ENCODE measurements at regions of chr7 and their contacts with region 1.

Region 1: DNA sequence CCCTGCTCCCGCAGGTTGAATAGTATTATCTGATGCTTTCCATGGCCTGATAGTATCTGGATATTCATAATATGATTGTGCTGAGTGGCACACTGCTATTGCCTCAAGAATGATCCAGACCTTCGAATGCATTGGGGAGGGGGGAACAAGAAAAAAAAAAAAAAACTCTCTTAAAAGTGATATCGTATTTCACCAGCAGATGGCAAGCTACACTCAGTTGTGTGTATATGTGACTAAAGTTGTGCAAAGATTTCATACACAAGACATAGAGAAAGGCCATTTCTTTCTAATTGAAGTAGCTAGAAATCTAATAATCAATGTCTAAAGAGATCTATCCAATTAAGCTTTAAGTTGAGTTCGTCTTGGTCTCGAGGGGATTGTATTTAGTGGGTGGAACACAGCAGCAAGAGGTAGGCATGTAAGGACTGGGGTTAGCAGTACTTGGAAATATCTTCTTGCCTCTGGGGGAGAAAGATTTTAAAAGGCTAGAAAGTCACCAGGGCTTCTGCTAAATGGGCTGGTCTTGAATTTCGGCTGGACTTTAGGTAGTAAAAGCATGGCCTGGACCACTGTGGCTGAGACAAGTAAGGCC is 15.3 kb downstream of the SFRP4 start:
- DNase-seq: no peak
- ATAC-seq: peak; percentile 74 to 79

Region 2: DNA sequence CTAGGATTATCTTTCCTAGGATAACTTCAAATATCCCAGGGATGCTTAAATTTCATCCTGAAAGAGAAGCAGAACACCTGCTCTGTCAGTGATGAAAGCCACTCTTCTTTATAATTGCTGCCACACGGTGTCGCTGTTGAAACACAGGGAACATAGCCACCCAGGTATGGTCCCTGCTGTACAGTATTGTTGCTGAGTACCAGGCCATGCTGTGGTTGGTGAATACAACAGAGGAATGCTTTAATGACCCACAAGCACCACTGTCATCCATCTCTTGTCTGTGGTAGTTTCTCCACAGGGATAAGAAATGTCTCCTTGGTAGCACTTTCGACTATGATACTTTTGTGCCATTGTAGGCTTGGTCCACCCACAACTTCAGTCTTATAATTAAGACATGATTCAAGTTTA is 206.2 kb after region 1 on chr7:
- intact Hi-C with region 1: loop called (anchors 5 to 10 kb)
- DNase-seq: peak; percentile 46
- ATAC-seq: peak; percentile 47 to 74

Region 3: DNA sequence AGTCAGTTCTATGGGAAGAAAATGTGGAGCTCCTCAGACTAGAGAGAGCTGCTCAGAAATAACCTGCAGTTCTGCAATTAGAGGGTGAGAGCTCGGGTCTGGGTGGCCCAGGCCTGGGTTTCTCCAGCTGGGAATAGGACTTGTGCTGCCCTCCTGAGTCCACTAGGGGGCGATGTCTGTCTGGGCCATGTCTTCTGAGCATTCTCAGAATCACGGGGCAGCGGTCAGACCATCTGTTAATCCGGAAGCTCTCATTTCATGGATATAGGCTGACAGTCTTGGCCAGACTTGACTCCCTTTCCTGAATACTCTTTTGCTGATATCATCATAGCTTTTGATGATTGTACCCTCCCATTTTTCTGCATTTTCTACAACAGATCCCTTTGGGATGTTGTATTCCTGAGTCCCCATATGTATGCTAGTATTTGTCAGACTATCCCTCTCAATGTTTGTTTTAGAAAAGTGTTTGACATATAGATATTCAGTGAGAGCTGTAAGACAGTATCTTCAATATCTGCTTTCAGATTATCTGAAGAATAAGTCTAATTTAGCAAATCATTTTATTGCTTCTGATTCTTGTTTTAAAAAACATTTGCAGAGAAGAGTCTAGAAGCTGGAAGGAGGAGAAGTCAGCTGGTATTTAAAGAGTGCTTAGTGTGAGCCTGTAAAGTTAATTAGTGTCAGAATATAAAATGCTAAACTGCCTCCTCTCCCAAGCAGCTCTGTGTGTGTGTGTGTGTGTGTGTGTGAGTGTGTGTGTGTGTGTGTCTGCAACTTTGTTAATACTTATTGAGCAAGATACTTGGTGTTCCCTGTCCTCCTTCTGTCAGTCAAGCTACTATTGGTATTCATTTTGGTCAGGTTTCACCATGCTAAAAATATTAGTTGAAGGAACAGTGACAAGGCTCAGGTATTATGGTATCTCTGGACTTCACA is 314.7 kb after region 1 on chr7:
- intact Hi-C with region 1: loop called in 1 of 2 experiments (anchors 2 kb)
- DNase-seq: peak; percentile 78
- ATAC-seq: peak; percentile 88 to 91

Region 4: GRCh38 chr7:38222481-38223096 is 321.3 kb after region 1 on chr7:
- intact Hi-C with region 1: loop called in 1 of 2 experiments (anchors 2 kb)
- DNase-seq: no peak
- ATAC-seq: peak; percentile 80 to 84

Region 5: GRCh38 chr7:38318803-38319416 is 417.6 kb after region 1 on chr7:
- intact Hi-C with region 1: loop called in 1 of 2 experiments (anchors 5 kb)
- DNase-seq: no peak
- ATAC-seq: peak; percentile 77 to 79